ENCODE measurements at regions of chr12 and their contacts with region 1.

Region 1: DNA sequence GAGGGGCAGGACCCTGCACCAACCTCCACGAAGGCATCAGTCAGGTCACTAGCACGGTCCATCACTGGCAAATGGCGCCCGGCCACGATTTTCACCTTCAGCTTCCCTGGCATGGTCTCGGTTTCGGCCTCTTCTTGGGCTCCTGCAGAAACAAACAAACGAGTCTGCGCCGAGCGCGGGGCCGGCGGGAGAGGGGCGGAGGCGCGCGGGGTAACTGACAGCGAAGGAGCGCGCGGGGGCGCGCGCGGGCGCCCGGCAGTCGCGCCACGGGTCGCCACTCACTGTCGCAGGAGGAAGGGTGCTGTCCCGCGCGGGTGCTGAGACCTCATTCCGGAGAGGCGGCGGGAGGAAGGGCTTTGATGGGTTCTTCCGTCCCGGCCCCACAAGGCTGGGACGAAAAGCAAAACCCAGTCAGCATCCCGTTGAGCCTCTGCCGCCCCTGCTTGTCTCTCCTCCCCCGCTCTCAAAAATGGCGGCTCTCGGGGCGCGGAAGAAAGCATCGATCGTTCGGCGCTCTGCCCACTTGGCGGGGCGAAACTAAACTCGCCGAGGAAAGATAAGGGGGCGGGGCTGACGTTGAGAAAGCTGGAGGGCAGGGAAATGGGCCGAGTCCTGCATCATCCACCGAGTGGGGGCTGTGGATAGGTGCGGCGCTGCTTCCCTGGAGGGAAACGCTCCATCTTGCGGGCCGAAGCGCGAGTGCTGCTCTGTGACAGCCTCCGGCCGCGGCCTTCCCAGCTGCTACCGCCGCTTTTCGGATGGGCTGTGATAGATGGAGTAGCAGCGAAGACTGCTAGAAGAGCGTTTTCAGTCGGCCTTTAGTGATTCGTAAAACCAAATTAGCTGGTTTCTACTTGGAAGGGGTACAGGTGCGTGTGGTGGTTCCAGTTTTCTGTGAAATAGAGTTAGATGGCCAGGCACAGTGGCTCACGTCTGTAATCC is at the start of gene C2CD5:
- DNase-seq: peak; percentile 97
- ATAC-seq: peak; percentile 91
- H3K4me3 Mint-ChIP-seq: peak within 1 kb of the TSS; percentile 94
- H3K27ac Mint-ChIP-seq: peak within 1 kb of the TSS; percentile 97
- H3K4me1 Mint-ChIP-seq: peaks cover 35% of the 10 kb centered on the region
- H3K27me3 Mint-ChIP-seq: peaks cover 15% of the 10 kb centered on the region
- total RNA-seq, gene C2CD5: 44.6 to 50.6 TPM

Region 2: DNA sequence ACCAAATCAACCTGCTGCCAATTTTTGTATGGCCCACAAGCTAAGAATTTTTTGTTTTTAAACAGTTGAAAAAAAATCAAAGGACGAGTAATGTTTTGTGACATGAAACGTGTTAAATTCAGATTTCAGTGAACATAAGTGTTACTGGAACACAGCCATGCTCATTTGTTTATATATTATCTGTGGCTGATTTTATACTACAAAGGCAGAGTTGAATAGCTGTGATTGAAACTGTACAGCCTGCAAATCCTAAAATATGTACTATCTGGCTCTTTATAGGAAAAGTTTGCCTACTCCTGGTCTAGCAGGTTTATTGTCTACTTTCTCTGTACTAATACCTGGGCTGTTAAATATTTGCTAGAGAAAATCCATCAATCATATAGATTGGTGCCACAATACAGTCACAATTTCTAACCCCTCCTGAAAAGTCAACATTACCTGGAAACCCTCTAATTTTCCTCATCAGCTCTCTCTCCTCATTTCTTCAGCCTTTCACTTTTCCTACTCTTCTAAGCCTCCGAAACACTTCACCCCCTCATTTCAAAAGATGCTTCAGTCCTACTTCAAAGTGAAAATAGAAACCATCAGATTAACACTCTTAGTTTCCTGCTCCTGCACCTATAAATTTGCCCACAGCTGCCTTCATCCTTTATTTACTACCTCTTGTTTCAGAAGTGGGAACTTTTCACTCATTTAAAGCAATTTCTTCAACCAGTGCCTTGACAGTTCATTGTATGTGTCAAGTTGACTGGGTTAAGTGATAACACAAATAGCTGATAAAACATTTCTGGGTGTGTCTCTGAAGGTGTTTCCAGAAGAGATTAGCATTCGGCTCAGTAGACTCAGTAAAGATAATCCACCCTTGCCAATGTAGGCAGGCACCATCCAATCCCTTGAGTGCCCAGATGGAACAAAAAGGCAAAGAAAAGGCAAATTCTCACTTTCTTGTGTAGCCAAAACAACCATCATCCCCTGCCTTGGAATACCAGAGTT is 18.0 kb after region 1 on chr12:
- CTCF ChIA-PET with region 1: no interaction called
- POLR2A ChIA-PET with region 1: no interaction called
- DNase-seq: no peak
- ATAC-seq: no peak
- H3K4me3 Mint-ChIP-seq: no peak overlapping the region
- H3K27ac Mint-ChIP-seq: no peak overlapping the region
- H3K4me1 Mint-ChIP-seq: peaks cover 5% of the 10 kb centered on the region
- H3K27me3 Mint-ChIP-seq: peaks cover 3% of the 10 kb centered on the region

Region 3: DNA sequence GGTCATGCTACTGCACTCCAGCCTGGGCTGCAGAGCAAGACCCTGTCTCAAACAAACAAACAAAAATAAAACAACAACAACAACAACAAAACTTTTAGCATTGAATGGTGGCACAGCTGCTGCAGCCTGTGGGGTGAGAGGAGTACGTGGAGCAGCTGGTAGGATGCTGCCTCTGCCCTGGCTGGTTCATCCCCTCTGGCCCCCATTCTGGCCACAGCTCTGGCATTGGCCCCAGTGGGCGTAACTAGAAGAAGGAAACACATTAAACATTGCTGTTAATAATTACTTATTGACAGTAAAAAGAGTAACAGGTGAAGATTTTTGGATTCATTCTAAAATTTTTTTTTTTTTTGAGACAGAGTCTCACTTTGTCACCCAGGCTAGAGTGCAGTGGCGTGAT is 28.9 kb after region 1 on chr12:
- CTCF ChIA-PET with region 1: no interaction called
- POLR2A ChIA-PET with region 1: no interaction called
- DNase-seq: no peak
- ATAC-seq: no peak
- H3K4me3 Mint-ChIP-seq: no peak overlapping the region
- H3K27ac Mint-ChIP-seq: no peak overlapping the region
- H3K4me1 Mint-ChIP-seq: no peaks in the 10 kb centered on the region
- H3K27me3 Mint-ChIP-seq: peaks cover 1% of the 10 kb centered on the region

Region 4: GRCh38 chr12:22624870-22625761 is 80.8 kb after region 1 on chr12 and contains the start of gene ETNK1:
- CTCF ChIA-PET with region 1: interaction called, 5 read pairs
- POLR2A ChIA-PET with region 1: interaction called, 24 read pairs
- DNase-seq: peak; percentile 88
- ATAC-seq: peak; percentile 98
- H3K4me3 Mint-ChIP-seq: peak within 1 kb of the TSS; percentile 88
- H3K27ac Mint-ChIP-seq: peak within 1 kb of the TSS; percentile 87
- H3K4me1 Mint-ChIP-seq: peaks cover 30% of the 10 kb centered on the region
- H3K27me3 Mint-ChIP-seq: peaks cover 10% of the 10 kb centered on the region
- total RNA-seq, gene ETNK1: 68.6 to 69.4 TPM

Measured in activated CD8-positive, alpha-beta T cell treated with anti-CD3 and anti-CD28 coated beads, Interleukin-2, amount 10 ng/mL, durations not matched to agents 7 days and 5 days (primary cell).